ENCODE measurements at regions of chr9 and their contacts with region 1.

Region 1: DNA sequence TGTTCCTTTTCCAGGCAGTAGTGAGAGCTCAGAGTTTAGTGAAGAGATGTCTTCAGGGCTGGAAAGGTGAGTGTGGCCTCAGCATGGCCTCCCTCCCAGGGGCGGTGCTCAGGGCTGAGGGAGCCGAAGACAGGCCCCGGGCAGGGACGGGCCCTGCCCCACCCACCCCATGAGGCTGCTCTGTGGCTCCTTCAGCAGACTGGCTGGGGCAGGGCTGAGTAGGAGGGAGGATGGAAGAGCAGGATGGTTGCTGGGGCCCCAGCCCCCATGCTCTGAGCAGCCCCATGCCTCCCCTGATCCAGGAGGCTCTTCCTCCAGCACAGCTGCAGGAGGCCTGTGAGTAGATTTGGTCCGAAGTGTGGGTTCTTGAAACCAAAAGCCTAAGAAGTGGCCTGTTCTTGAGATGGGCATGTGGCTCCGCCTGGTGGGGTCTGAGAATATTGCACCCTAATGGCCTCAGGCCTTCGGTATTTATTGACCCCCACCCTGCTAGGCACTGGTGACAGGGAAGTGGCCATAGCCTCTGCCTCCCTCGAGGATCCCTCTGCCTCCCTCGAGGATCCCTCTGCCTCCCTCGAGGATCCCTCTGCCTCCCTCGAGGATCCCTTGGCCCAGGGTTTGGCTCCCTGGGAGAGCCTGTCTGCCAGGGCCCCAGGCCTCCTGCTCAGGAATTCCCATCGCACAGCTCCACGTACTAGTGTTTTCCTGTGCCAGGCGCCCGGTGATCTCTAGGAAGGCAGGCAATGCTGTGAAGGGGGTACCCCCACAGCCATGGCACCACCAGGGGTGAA is 65.4 kb upstream of the GARNL3 start:
- DNase-seq: peak; percentile 85 to 93
- ATAC-seq: peak; percentile 86
- H3K4me3 ChIP-seq: no peak overlapping the region
- H3K27ac ChIP-seq: no peak overlapping the region
- H3K4me1 ChIP-seq: no peaks in the 10 kb centered on the region
- H3K27me3 ChIP-seq: no peaks in the 10 kb centered on the region

Region 2: DNA sequence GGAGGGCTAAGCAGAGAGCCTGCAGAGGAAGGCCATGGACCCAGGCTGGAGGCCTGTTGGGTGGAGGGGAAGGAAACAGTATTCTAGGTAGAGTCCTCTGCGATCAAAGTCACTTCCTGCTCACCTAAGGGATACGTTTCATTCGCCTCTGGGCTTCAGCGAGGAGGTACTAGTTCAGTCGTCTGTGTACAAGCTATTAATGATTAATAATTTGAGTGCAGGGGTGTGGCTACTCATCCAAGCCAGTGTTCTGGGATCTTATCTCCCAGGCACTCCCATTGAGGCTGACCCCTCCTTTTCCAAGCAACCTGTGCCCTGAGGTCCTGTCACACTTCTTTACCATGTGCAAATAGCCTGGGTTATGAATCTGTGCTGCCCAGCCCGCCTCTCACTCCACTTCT is 259.4 kb before region 1 on chr9:
- intact Hi-C with region 1: loop called (anchors 1 to 2 kb)
- DNase-seq: no peak
- ATAC-seq: no peak
- H3K4me3 ChIP-seq: no peak overlapping the region
- H3K27ac ChIP-seq: no peak overlapping the region
- H3K4me1 ChIP-seq: no peaks in the 10 kb centered on the region
- H3K27me3 ChIP-seq: no peaks in the 10 kb centered on the region

Region 3: GRCh38 chr9:126975327-126976220 is 223.6 kb before region 1 on chr9:
- intact Hi-C with region 1: loop called in 1 of 2 experiments (anchors 2 kb)
- DNase-seq: no peak
- ATAC-seq: no peak
- H3K4me3 ChIP-seq: no peak overlapping the region
- H3K27ac ChIP-seq: no peak overlapping the region
- H3K4me1 ChIP-seq: no peaks in the 10 kb centered on the region
- H3K27me3 ChIP-seq: no peaks in the 10 kb centered on the region

Measured in aorta (tissue), 5 donors.